Activated CD8-positive, alpha-beta T cell treated with anti-CD3 and anti-CD28 coated beads for 36 hours (primary cell): ENCODE measurements at regions of chr22 and their contacts with region 1.

Region 1: DNA sequence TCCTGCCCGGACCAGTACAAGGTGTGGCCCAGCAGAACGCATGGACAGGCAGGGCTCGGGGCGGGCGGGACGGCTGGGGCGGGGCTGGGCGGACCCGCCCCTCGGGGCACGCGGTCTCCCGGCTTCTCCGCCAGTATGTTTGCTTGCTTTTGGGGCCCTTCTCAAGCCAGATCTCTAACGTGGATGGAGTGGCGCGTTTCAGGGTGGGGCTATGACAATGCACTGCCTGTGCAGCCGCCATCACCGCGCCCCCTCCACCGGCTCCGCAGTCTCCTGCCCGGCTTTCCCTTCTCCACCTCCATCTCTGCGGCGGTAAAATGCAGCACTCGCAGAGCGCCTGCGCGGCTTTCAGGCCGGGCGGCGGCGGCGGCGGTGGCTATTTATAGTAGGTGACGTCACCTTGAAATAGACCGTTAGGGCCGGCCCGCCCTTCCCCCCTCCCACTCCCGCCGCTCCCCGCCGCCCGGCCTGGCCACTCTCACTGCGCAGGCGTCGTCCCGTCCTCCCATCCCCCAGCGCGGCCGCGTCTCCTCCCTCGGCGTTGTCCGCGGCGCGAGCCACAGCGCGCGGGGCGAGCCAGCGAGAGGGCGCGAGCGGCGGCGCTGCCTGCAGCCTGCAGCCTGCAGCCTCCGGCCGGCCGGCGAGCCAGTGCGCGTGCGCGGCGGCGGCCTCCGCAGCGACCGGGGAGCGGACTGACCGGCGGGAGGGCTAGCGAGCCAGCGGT is at the start of gene YWHAH:
- DNase-seq: peak; percentile 95
- ATAC-seq: peak; percentile 83
- H3K4me3 Mint-ChIP-seq: no peak within 1 kb of the TSS
- H3K27ac Mint-ChIP-seq: peak within 1 kb of the TSS; percentile 96
- H3K4me1 Mint-ChIP-seq: peaks cover 28% of the 10 kb centered on the region
- H3K27me3 Mint-ChIP-seq: no peaks in the 10 kb centered on the region
- CTCF ChIP-seq: no peak
- total RNA-seq, gene YWHAH: 123 to 126 TPM

Region 2: DNA sequence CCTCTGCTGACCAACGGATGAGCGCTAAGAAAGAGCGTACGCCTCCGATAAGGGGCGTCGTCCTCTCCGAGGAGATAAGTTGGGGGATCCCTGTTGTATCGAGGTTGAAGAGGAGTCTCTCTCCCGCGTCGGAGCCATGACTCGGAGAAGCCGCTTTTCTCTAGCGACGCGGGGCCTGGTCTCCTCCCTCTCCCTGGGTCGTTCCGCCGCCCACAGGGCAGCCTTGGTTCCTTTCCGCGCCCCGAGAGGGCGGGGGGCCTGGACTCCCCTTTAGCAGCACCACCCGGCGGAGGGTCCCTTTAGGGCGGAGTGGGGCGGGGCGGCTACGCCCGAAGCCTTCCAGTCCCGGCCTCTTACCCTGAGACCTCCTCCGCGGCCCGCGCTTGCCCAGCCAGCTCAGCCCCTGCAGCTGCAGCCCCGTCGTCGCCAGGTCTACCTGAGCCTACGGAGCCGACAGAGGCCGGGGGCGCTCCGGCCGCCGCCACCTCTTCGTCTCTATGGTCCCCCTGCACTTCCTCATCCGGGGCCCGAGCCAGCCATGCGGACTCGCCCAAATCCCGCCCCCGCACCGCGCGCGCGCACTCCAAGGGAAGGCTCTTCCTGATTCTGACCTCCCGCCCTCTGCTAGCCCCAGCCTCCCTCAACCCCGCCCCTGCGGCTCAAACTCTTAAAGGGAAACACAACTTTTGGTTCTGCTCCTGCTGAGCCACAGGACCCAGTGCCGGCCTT is 194.3 kb before region 1 on chr22 and contains the start of gene PRR14L:
- CTCF ChIA-PET with region 1: no interaction called
- POLR2A ChIA-PET with region 1: interaction called, 3 read pairs
- intact Hi-C with region 1: loop called (anchors 10 kb)
- DNase-seq: peak; percentile 100
- ATAC-seq: peak; percentile 77
- H3K4me3 Mint-ChIP-seq: peak within 1 kb of the TSS; percentile 89
- H3K27ac Mint-ChIP-seq: peak within 1 kb of the TSS; percentile 90
- H3K4me1 Mint-ChIP-seq: peaks cover 48% of the 10 kb centered on the region
- H3K27me3 Mint-ChIP-seq: no peaks in the 10 kb centered on the region
- CTCF ChIP-seq: no peak
- total RNA-seq, gene PRR14L: 40.2 to 45.1 TPM

Region 3: DNA sequence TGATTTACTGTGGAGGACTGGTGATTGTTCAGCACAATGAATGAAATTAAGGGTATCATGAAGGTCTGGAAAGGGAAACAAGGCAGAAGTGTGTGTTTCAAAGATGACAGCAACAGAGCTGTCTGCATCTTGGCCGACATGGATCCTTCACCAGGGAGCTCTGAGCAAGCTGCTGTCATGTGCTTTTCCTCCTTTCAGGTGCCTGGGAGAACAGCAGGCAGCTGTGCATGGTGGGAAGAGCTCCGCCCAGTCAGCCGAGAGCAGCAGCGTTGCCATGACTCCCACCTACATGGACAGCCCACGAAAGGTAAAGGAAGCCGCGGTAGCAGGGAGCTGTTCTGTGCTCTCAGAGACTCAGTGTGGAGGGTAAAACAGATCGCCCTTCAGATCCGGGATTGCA is 86.9 kb before region 1 on chr22:
- CTCF ChIA-PET with region 1: no interaction called
- POLR2A ChIA-PET with region 1: no interaction called
- intact Hi-C with region 1: no loop called
- DNase-seq: no peak
- ATAC-seq: no peak
- H3K4me3 Mint-ChIP-seq: no peak overlapping the region
- H3K27ac Mint-ChIP-seq: no peak overlapping the region
- H3K4me1 Mint-ChIP-seq: peaks cover 7% of the 10 kb centered on the region
- H3K27me3 Mint-ChIP-seq: no peaks in the 10 kb centered on the region
- CTCF ChIP-seq: no peak

Region 4: DNA sequence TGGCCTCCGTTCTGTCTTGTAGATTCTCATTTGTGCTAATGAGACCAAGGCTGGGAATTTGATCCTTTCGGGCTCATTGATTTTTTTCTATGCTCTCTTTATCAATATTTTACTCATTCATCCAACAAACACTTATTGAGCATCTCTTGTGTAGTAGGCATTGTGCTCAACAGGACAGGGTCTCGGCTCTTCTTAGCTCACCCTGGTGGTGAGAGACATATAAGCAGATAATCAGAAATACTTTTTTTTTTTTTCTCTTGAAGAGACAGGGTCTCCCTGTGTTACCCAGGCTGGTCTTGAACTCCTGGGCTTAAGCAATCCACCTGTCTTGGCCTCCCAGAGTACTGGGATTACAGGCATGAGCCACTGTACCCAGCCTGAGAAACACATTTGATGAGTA is 50.9 kb after region 1 on chr22:
- CTCF ChIA-PET with region 1: no interaction called
- POLR2A ChIA-PET with region 1: no interaction called
- intact Hi-C with region 1: no loop called
- DNase-seq: no peak
- ATAC-seq: no peak
- H3K4me3 Mint-ChIP-seq: no peak overlapping the region
- H3K27ac Mint-ChIP-seq: no peak overlapping the region
- H3K4me1 Mint-ChIP-seq: no peaks in the 10 kb centered on the region
- H3K27me3 Mint-ChIP-seq: peaks cover 5% of the 10 kb centered on the region
- CTCF ChIP-seq: peak; percentile 17